ENCODE measurements at regions of chr7 and their contacts with region 1.

Region 1: GRCh38 chr7:5450549-5451372 is 27.1 kb upstream of the TNRC18 start:
- DNase-seq: peak; percentile 94
- H3K4me3 ChIP-seq: no peak overlapping the region; a peak in 1 of 4 replicates
- H3K27ac ChIP-seq: no peak overlapping the region
- H3K4me1 ChIP-seq: peaks cover 0 to 3% of the 10 kb centered on the region in 2 experiments; a peak in 1 of 4 replicates
- H3K27me3 ChIP-seq: no peaks in the 10 kb centered on the region
- CTCF ChIP-seq: peak; percentile 78
- EP300 ChIP-seq: no peak
- RAD21 ChIP-seq: peak; percentile 85

Region 2: DNA sequence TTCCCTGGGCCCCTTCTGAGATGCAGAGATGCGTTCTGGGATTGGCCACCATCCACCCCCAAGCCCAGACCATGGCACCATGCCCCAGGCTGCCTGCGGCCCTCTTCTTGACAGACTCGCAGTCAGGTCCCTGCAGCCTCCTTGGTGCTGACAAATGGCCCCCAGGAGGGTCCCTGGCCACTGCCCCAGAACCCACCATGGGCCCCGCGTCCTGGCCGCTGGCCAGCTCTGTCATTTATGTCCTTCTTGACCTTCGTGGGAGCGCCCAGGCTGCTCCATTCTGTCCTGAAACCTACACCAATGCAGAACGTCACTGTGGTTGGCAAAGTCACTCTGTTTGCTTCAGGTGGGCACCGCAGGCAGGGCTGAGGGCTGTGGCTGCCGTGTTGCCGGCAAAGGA is 207.5 kb before region 1 on chr7:
- CTCF ChIA-PET with region 1: interaction called, 73 read pairs
- POLR2A ChIA-PET with region 1: no interaction called
- DNase-seq: no peak
- H3K4me3 ChIP-seq: no peak overlapping the region
- H3K27ac ChIP-seq: no peak overlapping the region
- H3K4me1 ChIP-seq: peaks cover 0 to 17% of the 10 kb centered on the region in 2 experiments; a peak in 1 of 4 replicates
- H3K27me3 ChIP-seq: 0 out of 2 replicates have a peak, but pooled peaks cover 4% of the 10 kb centered on the region
- CTCF ChIP-seq: no peak
- EP300 ChIP-seq: no peak
- RAD21 ChIP-seq: no peak

Region 3: GRCh38 chr7:5354460-5355232 is 96.1 kb before region 1 on chr7:
- CTCF ChIA-PET with region 1: interaction called, 26 read pairs
- POLR2A ChIA-PET with region 1: no interaction called
- DNase-seq: peak; percentile 99
- H3K4me3 ChIP-seq: peak overlapping the region in 1 of 2 experiments; percentile 20; a peak in 1 of 4 replicates
- H3K27ac ChIP-seq: peak overlapping the region in 1 of 2 experiments; percentile 56; a peak in 2 of 4 replicates
- H3K4me1 ChIP-seq: peaks cover 12 to 15% of the 10 kb centered on the region in 2 experiments; a peak in 2 of 4 replicates
- H3K27me3 ChIP-seq: no peaks in the 10 kb centered on the region
- CTCF ChIP-seq: no peak
- EP300 ChIP-seq: peak in 1 of 2 experiments; percentile 83; a peak in 2 of 4 replicates
- RAD21 ChIP-seq: 0 out of 2 replicates have a peak, but pooled peaks have one; percentile 15

Region 4: DNA sequence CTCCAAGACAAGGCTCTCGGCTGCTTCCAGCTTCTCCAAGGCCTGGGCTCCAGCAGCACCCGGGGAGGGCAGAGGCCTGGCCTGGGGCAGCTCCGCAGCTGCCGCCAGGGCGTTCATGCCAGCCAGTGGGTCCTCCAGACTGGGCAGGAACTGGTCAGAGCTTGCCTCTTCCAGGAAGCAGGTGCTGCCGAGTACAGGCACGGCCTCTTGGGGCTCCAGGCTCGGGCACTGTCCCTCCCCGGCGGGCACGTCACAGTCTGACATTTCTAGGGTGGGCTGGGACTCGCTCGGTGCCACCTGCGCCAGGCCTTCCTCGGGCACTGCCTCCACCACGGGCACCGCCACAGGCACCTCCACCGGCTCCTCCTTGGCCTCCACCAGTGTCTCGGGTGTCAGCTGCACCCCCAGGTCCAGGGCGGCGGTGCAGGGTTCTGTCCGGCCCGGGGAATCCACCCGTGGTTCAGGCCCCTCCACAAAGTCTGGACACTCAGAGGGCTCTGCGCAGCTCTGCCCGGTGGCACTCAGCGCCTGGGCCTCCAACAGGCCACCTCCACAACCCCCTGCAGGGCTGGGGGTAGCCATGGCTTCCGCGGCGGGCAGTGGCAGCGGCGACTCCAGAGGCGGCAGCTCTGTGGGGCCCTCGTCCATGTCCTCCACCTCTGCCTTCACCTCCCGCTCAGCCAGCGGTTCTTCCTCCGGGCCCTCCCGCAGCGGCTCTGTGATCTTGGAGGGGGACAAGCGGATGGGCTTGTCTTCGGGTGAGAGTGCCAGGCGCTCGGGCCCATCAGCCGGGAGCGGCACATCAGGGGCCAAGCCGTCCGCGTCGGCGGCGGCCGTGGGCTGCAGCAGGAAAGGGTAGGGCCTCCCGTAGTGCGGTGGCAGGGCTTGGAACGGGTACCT is 80.1 kb before region 1 on chr7:
- CTCF ChIA-PET with region 1: interaction called, 150 read pairs
- POLR2A ChIA-PET with region 1: no interaction called
- DNase-seq: no peak
- H3K4me3 ChIP-seq: no peak overlapping the region
- H3K27ac ChIP-seq: no peak overlapping the region
- H3K4me1 ChIP-seq: no peaks in the 10 kb centered on the region
- H3K27me3 ChIP-seq: no peaks in the 10 kb centered on the region
- CTCF ChIP-seq: no peak
- EP300 ChIP-seq: no peak
- RAD21 ChIP-seq: no peak

Region 5: GRCh38 chr7:5423844-5424688 is 26.7 kb before region 1 on chr7:
- CTCF ChIA-PET with region 1: interaction called, 22 read pairs
- POLR2A ChIA-PET with region 1: interaction called, 4 read pairs
- DNase-seq: peak; percentile 98
- H3K4me3 ChIP-seq: peak overlapping the region; percentile 99 to 100
- H3K27ac ChIP-seq: peak overlapping the region; percentile 97 to 99
- H3K4me1 ChIP-seq: peaks cover 6 to 20% of the 10 kb centered on the region in 2 experiments; a peak in 3 of 4 replicates
- H3K27me3 ChIP-seq: no peaks in the 10 kb centered on the region
- CTCF ChIP-seq: no peak
- EP300 ChIP-seq: peak; percentile 62 to 63; a peak in 3 of 4 replicates
- RAD21 ChIP-seq: no peak; the same call in 1 of the 2 replicates

Region 6: DNA sequence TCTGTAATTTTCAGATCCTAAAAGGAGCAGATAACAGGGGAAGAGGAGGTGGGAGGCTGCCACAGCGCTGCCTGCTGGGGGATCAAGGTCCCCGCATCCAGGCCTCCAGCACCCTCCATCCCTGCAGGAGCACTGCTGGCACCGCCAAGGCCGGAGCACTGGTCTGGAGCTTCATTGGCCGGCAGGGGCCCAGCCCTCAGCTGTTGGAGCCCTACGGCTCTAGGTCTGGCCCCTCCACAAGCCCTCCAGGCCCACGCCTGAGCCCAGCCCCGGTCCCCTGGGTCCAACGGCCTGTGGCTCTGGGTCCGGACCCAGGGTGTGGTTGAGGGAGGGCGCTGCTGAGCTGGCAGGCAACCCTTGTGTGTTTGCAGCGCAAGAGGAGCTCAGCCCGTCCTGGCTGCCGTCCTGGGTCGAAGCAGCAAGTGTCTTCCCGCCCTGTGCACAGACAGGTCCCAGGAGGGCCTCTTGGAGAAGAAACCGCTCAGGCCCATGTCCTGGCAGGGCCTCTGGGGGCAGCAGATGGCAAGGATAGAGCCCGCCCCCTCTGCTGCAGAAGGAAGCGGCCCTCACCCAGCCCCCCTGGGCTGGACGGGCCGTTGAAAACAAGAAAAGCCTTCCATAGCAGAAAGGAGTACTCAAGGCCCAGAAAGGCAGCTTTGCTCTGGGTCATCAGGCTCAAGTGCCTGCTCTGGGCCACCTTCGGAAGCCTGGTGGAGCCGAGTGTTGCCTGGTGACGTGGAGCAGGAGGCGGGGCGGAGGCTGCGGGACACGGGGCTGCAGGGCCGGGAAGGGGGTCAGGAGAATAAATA is 27.2 kb after region 1 on chr7:
- CTCF ChIA-PET with region 1: interaction called, 11 read pairs
- POLR2A ChIA-PET with region 1: no interaction called
- DNase-seq: peak; percentile 88
- H3K4me3 ChIP-seq: no peak overlapping the region
- H3K27ac ChIP-seq: peak overlapping the region in 1 of 2 experiments; percentile 64; a peak in 1 of 4 replicates
- H3K4me1 ChIP-seq: peaks cover 0 to 26% of the 10 kb centered on the region in 2 experiments; a peak in 1 of 4 replicates
- H3K27me3 ChIP-seq: no peaks in the 10 kb centered on the region
- CTCF ChIP-seq: peak; percentile 15; the same call in 1 of the 2 replicates
- EP300 ChIP-seq: no peak
- RAD21 ChIP-seq: peak; percentile 9; the same call in 1 of the 2 replicates